ENCODE measurements at regions of chrX and their contacts with region 1.

Region 1: DNA sequence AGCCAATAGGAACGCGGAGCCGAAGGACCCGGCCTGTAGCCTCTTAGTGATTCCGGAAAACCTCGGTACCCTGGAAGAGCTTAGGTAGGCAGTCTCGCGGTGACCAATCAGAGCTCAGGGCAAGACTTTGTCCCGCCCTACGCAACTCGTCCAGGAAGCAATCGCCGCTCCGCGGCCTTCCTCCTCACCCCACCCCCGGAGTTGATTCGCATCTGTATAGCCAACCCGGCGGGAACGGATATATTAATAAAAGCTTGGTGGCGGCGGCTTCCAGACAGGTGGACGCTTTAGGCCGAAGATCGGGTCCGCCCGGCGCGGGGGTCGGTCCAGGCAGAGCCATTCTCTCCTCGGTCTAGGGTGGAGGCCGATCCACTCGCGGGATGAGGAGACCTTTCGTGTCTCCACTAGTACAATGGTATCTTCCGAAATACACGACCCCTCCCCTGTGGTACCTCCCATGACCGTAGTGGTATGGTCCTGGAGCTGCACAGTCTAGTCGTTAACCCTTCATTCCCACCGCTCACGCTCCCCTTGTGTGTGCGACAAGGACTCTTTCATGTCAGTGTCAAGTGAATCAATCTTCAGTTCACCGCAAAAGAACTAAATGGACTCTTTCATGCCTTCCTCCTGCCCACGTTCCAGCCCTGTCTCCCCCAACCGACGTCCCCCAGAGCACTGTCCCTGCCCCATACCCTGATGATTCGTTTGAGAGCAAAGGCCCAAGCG is 24.2 kb upstream of the GLOD5 start:
- DNase-seq: peak; percentile 63 to 96 (median 85)
- ATAC-seq: peak; percentile 95
- H3K4me3 Mint-ChIP-seq: peak overlapping the region; percentile 81 to 95 (median 92)
- H3K27ac Mint-ChIP-seq: peak overlapping the region; percentile 95 to 99 (median 97)
- H3K4me1 Mint-ChIP-seq: peaks cover 11 to 23% (median 22%) of the 10 kb centered on the region in 4 donors
- H3K27me3 Mint-ChIP-seq: no peaks in the 10 kb centered on the region

Region 2: GRCh38 chrX:48696301-48697181 is 40.8 kb before region 1 on chrX and contains the start of gene SUV39H1:
- POLR2A ChIA-PET with region 1: interaction called, 29 read pairs
- DNase-seq: peak; percentile 71 to 90 (median 83)
- ATAC-seq: peak; percentile 92 to 95
- H3K4me3 Mint-ChIP-seq: peak within 1 kb of the TSS; percentile 82 to 98 (median 90)
- H3K27ac Mint-ChIP-seq: peak within 1 kb of the TSS; percentile 94 to 98 (median 97)
- H3K4me1 Mint-ChIP-seq: peaks cover 14 to 29% (median 28%) of the 10 kb centered on the region in 4 donors
- H3K27me3 Mint-ChIP-seq: no peaks in the 10 kb centered on the region
- polyA plus RNA-seq, gene SUV39H1: 9.8 to 13.9 (median 10.2) TPM

Region 3: DNA sequence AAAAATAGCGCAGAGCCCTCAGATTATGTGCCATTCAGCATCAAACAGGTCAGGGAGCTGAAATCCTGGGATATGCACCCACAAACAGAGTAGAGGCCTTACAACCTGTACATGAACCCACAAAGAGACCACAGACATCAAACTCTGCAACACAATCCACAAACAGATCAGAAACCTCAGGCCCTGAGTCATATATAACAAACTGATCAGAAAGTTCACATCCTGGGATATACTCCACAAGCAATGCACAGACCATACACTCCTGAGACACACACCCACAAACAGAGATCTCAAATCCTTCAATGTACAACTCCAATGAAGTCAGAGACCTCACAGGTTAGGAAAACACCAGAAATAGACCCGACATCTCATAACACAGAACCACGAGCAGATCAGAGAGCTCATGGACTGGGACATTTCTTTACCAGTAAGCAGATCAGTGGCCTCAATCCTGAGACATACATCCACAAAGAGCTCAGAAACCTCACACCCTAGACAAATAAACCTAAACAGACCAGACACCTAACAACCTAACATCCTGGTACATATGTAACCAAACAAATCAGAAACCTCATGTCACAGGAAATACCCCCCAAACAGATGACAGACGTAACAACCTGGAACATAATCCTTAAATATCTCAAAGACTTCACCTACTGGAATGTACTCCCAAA is 16.7 kb before region 1 on chrX:
- POLR2A ChIA-PET with region 1: interaction called, 28 read pairs
- DNase-seq: peak in 4 of 10 donors; percentile 29 to 58 (median 42)
- ATAC-seq: peak; percentile 67 to 82
- H3K4me3 Mint-ChIP-seq: no peak overlapping the region
- H3K27ac Mint-ChIP-seq: no peak overlapping the region
- H3K4me1 Mint-ChIP-seq: peaks cover 30 to 47% (median 44%) of the 10 kb centered on the region in 4 donors
- H3K27me3 Mint-ChIP-seq: no peaks in the 10 kb centered on the region

Region 4: DNA sequence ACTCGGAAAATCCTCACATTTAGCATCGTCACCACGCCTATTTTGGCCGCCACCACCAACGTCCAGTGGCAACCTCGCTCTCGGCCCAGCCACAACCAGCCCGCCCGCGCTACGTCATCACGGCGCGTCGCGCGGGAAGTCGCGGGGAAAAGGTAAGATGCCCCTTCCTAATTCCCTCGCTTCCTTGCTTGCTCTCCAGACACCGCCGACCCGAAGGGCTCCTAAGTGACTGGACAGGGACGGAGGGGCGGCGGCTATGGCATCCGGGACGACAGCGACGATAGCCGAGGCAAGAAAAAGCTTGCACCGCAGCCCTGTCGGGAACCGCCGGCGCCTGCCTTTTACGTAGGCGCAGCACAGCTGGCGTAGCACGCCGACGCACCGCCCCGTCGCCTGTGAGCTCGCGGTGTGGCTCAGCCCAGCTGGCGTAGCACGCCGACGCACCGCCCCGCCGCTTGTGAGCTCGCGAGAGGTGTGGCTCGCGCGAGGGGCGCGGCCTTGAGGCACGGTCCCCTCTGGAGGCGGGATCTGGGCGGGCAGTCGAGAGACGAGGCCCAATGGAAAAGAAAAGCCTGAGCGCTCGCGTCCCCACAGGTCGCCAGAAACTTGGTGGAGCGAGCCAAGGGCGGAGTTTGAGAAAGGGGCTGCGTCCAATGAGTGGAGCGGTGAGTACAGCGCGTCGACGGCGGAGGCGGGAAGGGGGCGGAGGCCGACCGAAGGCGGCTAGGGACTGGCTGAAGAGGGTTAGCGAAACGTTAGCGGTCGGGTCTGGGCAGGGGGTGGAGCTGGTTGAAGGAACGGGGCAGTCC is 64.1 kb after region 1 on chrX and contains the start of gene HDAC6:
- POLR2A ChIA-PET with region 1: interaction called, 32 read pairs
- DNase-seq: peak; percentile 85 to 97 (median 95)
- ATAC-seq: peak; percentile 87
- H3K4me3 Mint-ChIP-seq: peak within 1 kb of the TSS; percentile 94 to 98 (median 96)
- H3K27ac Mint-ChIP-seq: peak within 1 kb of the TSS; percentile 95 to 99 (median 98)
- H3K4me1 Mint-ChIP-seq: peaks cover 10 to 21% (median 19%) of the 10 kb centered on the region in 4 donors
- H3K27me3 Mint-ChIP-seq: no peaks in the 10 kb centered on the region
- polyA plus RNA-seq, gene HDAC6: 10.5 to 15.9 (median 13.0) TPM

Region 5: DNA sequence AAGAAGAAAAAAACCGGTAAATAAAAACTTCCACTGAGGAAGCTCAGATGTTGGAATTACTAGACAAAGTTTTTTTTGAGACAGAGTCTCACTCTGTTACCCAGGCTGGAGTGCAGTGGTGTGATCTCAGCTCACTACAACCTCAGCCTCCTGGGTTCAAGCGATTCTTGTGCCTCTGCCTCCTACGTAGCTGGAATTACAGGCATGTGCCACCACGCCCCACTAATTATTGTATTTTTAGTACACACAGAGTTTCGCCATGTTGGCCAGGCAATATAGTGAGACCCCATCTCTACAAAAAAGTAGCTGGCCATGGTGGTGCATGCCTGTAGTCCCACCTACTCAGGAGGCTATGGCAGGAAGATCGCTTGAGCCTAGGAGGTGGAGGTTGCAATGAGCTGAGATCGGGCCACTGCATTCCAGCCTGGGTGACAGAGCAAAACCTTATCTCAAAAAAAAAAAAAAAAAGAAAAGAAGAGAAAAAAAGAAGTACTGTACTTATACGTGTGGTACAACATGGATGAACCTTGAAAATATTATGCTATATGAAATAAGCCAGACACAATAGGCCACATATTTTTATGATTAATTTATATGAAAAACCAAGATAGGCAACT is 352.1 kb after region 1 on chrX:
- POLR2A ChIA-PET with region 1: no interaction called
- DNase-seq: no peak
- ATAC-seq: no peak
- H3K4me3 Mint-ChIP-seq: no peak overlapping the region
- H3K27ac Mint-ChIP-seq: no peak overlapping the region
- H3K4me1 Mint-ChIP-seq: no peaks in the 10 kb centered on the region
- H3K27me3 Mint-ChIP-seq: no peaks in the 10 kb centered on the region